ENCODE measurements at regions of chr19 and their contacts with region 1.

Region 1: DNA sequence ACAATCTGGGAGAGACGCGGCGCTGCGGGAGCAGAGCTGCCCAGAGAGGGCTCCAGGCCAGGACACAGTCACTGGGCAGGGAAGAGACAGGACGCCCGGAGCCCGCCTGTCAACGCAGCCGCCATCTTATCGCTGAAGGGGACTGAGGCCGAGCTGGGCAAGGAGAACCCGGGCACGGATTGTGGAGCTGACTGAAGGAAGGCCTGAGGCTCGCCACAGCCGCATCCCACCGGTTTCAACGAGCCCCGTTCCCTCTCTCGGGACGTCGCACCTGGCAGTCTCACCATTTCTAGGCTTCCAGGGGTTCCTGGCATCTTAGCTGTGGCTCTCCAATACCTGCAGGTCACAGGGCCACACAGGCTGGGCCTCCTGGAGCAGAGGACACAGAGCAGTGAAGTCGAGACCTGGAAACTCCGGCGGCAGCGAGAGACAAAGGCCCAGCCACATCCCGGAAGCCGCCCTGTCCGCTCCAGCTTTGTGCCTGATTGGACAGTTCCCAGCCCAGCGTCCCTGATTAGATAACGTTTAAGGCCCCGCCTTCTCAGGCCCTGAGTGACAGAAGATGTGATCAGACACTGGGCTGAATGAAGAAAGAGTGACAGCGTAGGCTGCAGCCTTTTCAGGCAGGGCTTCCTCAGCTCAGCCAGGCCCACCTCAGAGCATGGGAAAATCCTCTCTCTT is at the start of gene ZNF91:
- DNase-seq: peak; percentile 94 to 96
- ATAC-seq: peak; percentile 97 to 98 (median 98)
- H3K4me3 ChIP-seq: peak within 1 kb of the TSS; percentile 92
- H3K27ac ChIP-seq: peak within 1 kb of the TSS; percentile 94
- H3K4me1 ChIP-seq: peaks cover 28% of the 10 kb centered on the region
- H3K27me3 ChIP-seq: no peaks in the 10 kb centered on the region
- CTCF ChIP-seq: no peak
- total RNA-seq, gene ZNF91: 75.9 to 161 (median 101) TPM

Region 2: GRCh38 chr19:23273590-23274413 is 121.4 kb before region 1 on chr19:
- intact Hi-C with region 1: loop called in 1 of 2 experiments (anchors 10 kb)
- DNase-seq: peak; percentile 91 to 93
- ATAC-seq: peak; percentile 99 to 100 (median 100)
- H3K4me3 ChIP-seq: peak overlapping the region; percentile 99
- H3K27ac ChIP-seq: peak overlapping the region; percentile 74
- H3K4me1 ChIP-seq: peaks cover 6% of the 10 kb centered on the region
- H3K27me3 ChIP-seq: no peaks in the 10 kb centered on the region
- CTCF ChIP-seq: no peak

Measured in psoas muscle (tissue), 8 donors.